GM12878 (cell line): ENCODE measurements at regions of chr13 and their contacts with region 1.

Region 1: DNA sequence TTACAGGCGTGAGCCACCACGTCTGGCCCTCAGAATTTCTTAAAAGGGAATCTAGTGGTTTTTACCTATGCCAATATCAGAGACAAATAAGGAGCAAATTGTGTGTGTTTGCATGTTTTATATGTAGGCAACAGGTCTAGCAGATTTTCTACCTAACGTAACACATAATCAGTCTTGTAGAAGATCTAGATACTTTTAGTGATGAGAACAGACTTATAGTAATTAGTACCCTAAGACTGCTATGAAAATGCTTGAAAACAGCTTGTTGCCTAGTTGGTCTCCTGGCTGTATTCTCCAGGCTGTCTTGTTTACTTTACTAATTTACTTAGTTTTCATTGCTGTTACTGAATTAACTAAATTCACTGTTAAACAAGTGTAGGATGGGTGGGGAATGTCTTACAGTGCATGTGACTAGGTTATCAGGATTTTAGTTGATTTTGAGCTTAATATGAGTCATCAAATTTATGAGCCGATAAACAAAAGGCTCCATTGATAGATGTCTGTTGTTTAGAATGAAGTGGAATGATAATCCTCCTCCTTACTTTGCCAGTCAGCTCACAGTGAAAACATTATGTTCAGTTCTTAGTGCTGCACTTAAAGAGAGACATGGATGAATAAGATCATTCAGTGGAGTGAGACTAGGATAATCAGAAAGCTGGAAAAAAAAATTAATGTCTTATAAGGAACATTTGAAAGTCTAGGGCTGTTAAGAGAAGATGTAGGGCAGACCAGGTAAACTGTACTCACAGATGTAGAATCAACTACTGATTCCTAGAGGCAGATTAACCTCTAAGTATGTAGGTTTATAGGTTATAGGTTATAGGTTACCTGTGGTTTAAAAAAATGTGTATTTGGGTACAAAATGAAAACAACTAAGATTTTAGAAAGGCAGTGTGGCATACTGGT is 22.4 kb downstream of the GTF2F2 start:
- DNase-seq: no peak
- ATAC-seq: no peak
- H3K4me3 ChIP-seq: no peak overlapping the region
- H3K27ac ChIP-seq: no peak overlapping the region
- H3K4me1 ChIP-seq: no peaks in the 10 kb centered on the region
- H3K27me3 ChIP-seq: no peaks in the 10 kb centered on the region
- CTCF ChIP-seq: no peak
- EP300 ChIP-seq: no peak
- POLR2A ChIP-seq: no peak
- RAD21 ChIP-seq: no peak

Region 2: GRCh38 chr13:44917589-44918325 is 224.9 kb before region 1 on chr13:
- CTCF ChIA-PET with region 1: no interaction called
- POLR2A ChIA-PET with region 1: no interaction called
- RAD21 ChIA-PET with region 1: no interaction called
- SMC1A ChIA-PET with region 1: no interaction called
- in situ Hi-C with region 1: no loop called
- intact Hi-C with region 1: no loop called
- DNase-seq: peak; percentile 98
- ATAC-seq: peak; percentile 90
- H3K4me3 ChIP-seq: peak overlapping the region; percentile 84
- H3K27ac ChIP-seq: peak overlapping the region; percentile 80
- H3K4me1 ChIP-seq: peaks cover 3% of the 10 kb centered on the region; the same call in 1 of the 2 replicates
- H3K27me3 ChIP-seq: no peaks in the 10 kb centered on the region
- CTCF ChIP-seq: peak in 2 of 3 experiments; percentile 11 to 40; a peak in 5 of 6 replicates
- EP300 ChIP-seq: peak in 1 of 2 experiments; percentile 79; a peak in 2 of 4 replicates
- POLR2A ChIP-seq: peak; percentile 64; the same call in 1 of the 2 replicates
- RAD21 ChIP-seq: peak; percentile 26; the same call in 1 of the 2 replicates

Region 3: DNA sequence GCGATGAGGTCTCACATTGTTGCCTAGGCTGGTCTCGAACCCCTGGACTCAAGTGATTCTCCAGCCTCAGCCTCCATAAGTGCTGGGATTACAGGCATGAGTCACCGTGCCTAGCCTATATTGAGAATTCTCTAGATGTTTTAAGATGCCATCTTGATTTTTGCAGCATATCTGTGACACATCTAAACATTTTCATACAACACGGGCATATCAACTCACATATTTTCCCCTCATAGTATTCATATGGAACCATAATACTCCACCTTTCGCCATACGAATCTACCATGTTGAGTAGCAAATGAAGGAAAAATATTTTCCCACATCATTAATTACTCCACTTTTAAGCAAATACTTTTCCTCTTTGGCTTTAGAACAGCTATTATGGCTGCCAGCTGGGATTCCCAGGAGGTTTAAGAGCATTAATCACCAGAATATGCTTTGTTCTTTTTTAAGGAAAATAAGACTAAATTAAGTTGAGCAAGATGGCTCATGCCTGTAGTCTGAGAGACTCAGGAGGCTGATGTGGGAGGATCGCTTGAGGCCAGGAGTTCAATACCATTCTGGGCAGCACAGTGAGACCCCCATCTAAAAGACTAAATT is 79.3 kb before region 1 on chr13:
- CTCF ChIA-PET with region 1: no interaction called
- POLR2A ChIA-PET with region 1: interaction called, 10 read pairs
- RAD21 ChIA-PET with region 1: no interaction called
- SMC1A ChIA-PET with region 1: no interaction called
- in situ Hi-C with region 1: no loop called
- intact Hi-C with region 1: no loop called
- DNase-seq: no peak
- ATAC-seq: no peak
- H3K4me3 ChIP-seq: no peak overlapping the region
- H3K27ac ChIP-seq: no peak overlapping the region
- H3K4me1 ChIP-seq: no peaks in the 10 kb centered on the region
- H3K27me3 ChIP-seq: peaks cover 0 to 4% of the 10 kb centered on the region in 2 experiments; a peak in 2 of 4 replicates
- CTCF ChIP-seq: no peak
- EP300 ChIP-seq: no peak
- POLR2A ChIP-seq: no peak
- RAD21 ChIP-seq: no peak

Region 4: GRCh38 chr13:45082964-45083363 is 59.7 kb before region 1 on chr13:
- CTCF ChIA-PET with region 1: no interaction called
- POLR2A ChIA-PET with region 1: no interaction called
- RAD21 ChIA-PET with region 1: no interaction called
- SMC1A ChIA-PET with region 1: no interaction called
- in situ Hi-C with region 1: no loop called
- intact Hi-C with region 1: no loop called
- DNase-seq: no peak
- ATAC-seq: no peak
- H3K4me3 ChIP-seq: no peak overlapping the region
- H3K27ac ChIP-seq: no peak overlapping the region
- H3K4me1 ChIP-seq: no peaks in the 10 kb centered on the region
- H3K27me3 ChIP-seq: no peaks in the 10 kb centered on the region; a peak in 1 of 4 replicates
- CTCF ChIP-seq: no peak
- EP300 ChIP-seq: no peak
- POLR2A ChIP-seq: no peak
- RAD21 ChIP-seq: no peak

Region 5: DNA sequence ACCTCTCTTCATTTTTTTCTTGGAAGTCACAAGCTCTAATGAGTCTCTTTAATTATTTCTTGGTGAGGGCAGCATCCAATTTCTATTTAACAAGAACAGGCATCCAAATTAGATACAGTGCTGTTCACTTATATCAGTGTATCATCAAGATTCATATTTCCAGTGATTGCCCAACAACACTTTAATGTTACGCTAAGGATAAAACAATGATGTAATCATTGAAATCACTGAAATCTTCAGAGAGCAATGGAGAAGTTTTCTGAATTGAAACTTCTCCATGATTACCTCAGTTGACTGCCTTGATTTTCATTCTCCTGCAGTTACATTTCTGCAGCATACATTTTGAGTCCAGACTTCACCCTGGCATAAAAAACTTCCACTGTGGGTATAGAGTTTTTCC is 1393.1 kb after region 1 on chr13:
- CTCF ChIA-PET with region 1: no interaction called
- POLR2A ChIA-PET with region 1: no interaction called
- RAD21 ChIA-PET with region 1: no interaction called
- SMC1A ChIA-PET with region 1: no interaction called
- in situ Hi-C with region 1: no loop called
- intact Hi-C with region 1: no loop called
- DNase-seq: no peak
- ATAC-seq: no peak
- H3K4me3 ChIP-seq: no peak overlapping the region
- H3K27ac ChIP-seq: no peak overlapping the region
- H3K4me1 ChIP-seq: no peaks in the 10 kb centered on the region
- H3K27me3 ChIP-seq: no peaks in the 10 kb centered on the region
- CTCF ChIP-seq: no peak
- EP300 ChIP-seq: no peak
- POLR2A ChIP-seq: no peak
- RAD21 ChIP-seq: no peak